ENCODE measurements at regions of chr1 and their contacts with region 1.

Region 1: DNA sequence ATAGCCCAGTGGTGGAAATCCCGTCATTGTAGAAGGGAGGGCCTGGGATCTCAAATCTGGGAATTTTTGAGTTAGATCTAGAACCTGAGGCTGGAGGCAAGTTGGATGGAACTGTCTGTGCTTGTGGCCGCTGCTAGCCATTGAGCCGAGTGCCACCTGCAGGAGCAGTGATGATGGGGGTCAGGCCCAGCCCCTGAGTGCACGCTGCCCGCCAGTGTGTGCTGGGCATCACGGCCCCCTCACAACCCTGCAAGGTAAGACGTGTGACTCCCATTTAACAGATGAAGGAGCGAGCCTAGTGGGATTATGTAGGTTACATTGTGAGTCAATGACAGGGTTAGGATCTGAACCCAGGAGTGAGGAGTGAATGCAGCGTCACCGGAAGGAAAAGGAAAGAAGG is 407.2 kb downstream of the CAMTA1 start:
- DNase-seq: no peak
- H3K4me3 ChIP-seq: no peak overlapping the region
- H3K27ac ChIP-seq: no peak overlapping the region
- H3K4me1 ChIP-seq: peaks cover 0 to 3% of the 10 kb centered on the region in 2 experiments; a peak in 2 of 4 replicates
- H3K27me3 ChIP-seq: no peaks in the 10 kb centered on the region
- CTCF ChIP-seq: no peak
- EP300 ChIP-seq: no peak
- RAD21 ChIP-seq: no peak

Region 2: GRCh38 chr1:7172804-7173203 is 19.6 kb before region 1 on chr1:
- CTCF ChIA-PET with region 1: no interaction called
- POLR2A ChIA-PET with region 1: no interaction called
- DNase-seq: no peak
- H3K4me3 ChIP-seq: no peak overlapping the region
- H3K27ac ChIP-seq: no peak overlapping the region
- H3K4me1 ChIP-seq: peaks cover 0 to 8% of the 10 kb centered on the region in 2 experiments; a peak in 1 of 4 replicates
- H3K27me3 ChIP-seq: no peaks in the 10 kb centered on the region
- CTCF ChIP-seq: no peak
- EP300 ChIP-seq: no peak
- RAD21 ChIP-seq: no peak

Region 3: GRCh38 chr1:7207875-7208646 is 15.6 kb after region 1 on chr1:
- CTCF ChIA-PET with region 1: interaction called, 24 read pairs
- POLR2A ChIA-PET with region 1: no interaction called
- DNase-seq: peak; percentile 73
- H3K4me3 ChIP-seq: no peak overlapping the region; a peak in 1 of 4 replicates
- H3K27ac ChIP-seq: no peak overlapping the region
- H3K4me1 ChIP-seq: peaks cover 0 to 8% of the 10 kb centered on the region in 2 experiments; a peak in 2 of 4 replicates
- H3K27me3 ChIP-seq: no peaks in the 10 kb centered on the region
- CTCF ChIP-seq: peak; percentile 55
- EP300 ChIP-seq: no peak
- RAD21 ChIP-seq: peak; percentile 85